ENCODE measurements at regions of chr12 and their contacts with region 1.

Region 1: DNA sequence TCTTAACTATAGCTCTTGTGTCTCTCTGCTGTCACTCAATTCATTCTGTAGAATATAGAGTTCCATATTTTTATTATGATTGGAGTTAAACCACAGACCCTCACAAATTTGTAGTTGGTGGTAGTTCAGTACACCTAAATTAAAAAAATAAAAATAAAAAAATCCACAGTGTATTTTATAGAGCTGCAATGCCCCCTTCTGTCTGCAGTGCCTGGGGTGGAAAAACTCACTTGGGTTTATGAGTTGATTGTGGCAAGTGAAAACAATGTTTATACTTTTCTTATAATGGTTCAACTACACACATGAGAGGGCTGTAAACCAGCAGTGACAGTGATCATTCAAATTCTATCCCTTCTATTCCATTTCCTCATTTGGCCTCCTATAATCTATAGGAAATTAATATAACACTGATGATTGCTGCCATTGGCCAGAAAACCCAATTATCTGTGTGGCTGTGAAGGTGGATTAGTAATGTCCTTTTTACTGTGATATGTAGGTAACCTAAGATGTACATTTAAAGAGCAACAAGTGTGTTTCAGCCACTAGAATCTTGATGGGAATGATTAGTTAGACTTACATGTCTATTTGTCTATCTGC is 166.9 kb upstream of the LRIG3 start:
- DNase-seq: no peak
- H3K4me3 ChIP-seq: no peak overlapping the region
- H3K27ac ChIP-seq: no peak overlapping the region
- H3K4me1 ChIP-seq: peaks cover 12% of the 10 kb centered on the region
- H3K27me3 ChIP-seq: no peaks in the 10 kb centered on the region
- CTCF ChIP-seq: peak; percentile 63 to 72

Region 2: DNA sequence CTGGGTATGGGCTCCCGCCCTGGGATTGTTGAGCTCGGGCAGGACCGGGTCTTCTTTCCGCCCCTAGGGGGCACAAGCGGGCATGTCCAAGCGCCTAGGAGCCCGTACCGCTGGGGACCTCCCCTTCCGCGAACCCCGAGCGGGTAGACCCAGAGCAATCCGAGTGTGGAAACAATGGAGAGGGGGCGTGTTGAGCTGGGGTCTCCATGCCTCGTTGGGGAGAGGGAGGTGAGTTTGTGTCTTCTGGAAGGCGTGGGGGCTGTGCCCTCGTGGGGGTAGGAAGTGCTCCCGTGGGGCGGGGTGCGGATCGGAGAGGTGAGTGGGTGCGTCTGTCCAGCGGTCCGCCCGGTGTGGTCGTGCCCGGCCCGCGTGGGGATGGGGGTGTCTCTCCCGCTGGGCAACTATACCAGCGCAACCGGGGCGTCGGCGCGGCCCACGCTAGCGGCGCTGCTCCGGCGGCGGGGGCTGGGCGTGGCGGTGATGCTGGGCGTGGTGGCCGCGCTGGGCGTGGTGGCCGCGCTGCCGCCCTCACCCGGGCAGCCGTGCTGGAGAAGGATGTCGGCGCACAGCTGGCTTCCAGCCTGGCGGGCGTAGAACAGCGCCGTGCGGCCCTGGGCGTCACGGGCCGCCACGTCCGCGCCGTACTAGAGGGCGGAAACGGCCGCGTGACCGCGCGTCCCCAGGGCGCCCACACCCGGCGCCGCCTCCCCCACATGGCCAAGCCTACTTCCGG is 1360.9 kb before region 1 on chr12:
- CTCF ChIA-PET with region 1: interaction called, 11 read pairs
- dilution Hi-C with region 1: no loop called
- in situ Hi-C with region 1: no loop called
- intact Hi-C with region 1: no loop called
- DNase-seq: peak; percentile 73
- H3K4me3 ChIP-seq: peak overlapping the region; percentile 64 to 82 (median 81)
- H3K27ac ChIP-seq: peak overlapping the region; percentile 38
- H3K4me1 ChIP-seq: peaks cover 10% of the 10 kb centered on the region
- H3K27me3 ChIP-seq: no peaks in the 10 kb centered on the region
- CTCF ChIP-seq: peak; percentile 55 to 91

Region 3: GRCh38 chr12:58105225-58106119 is 981.7 kb before region 1 on chr12:
- CTCF ChIA-PET with region 1: interaction called, 13 read pairs
- dilution Hi-C with region 1: no loop called
- in situ Hi-C with region 1: no loop called
- intact Hi-C with region 1: no loop called
- DNase-seq: peak; percentile 3
- H3K4me3 ChIP-seq: no peak overlapping the region
- H3K27ac ChIP-seq: no peak overlapping the region
- H3K4me1 ChIP-seq: no peaks in the 10 kb centered on the region
- H3K27me3 ChIP-seq: no peaks in the 10 kb centered on the region
- CTCF ChIP-seq: peak; percentile 38 to 60

Region 4: DNA sequence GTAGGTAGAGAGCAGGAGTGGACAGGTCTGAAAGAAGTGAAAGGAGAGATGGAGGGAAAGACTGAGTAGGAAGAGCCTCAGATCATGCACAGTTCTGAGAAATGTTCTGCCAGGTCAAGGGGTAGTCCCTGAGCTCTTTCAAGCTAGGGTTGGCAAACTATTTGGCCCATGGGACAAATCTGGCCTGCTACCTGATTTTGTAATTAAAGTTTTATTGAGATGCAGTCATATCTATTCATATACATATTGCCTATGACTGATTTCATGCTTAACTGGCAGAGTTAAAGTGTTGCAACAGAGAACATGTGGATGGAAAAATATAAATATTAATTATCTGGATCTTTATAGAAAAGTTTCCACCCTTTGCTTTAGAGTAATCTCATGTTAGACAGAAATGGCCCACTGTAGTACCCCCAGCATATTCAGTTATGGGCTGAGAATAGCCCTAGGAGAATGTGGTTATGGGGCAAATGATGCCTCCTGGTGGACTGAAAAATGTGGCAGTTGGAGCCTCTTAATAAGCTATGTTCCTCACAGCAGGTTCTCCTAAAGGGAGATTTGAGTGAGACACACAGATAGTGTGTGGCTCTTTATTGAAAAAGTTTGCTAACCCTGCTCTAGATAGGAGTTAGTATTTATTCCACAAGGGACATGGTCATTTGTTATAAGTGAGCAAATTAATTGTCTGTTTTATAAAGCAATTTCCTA is 643.7 kb before region 1 on chr12:
- CTCF ChIA-PET with region 1: no interaction called
- dilution Hi-C with region 1: no loop called
- in situ Hi-C with region 1: no loop called
- intact Hi-C with region 1: loop called (anchors 10 kb)
- DNase-seq: peak; percentile 35
- H3K4me3 ChIP-seq: no peak overlapping the region
- H3K27ac ChIP-seq: no peak overlapping the region
- H3K4me1 ChIP-seq: no peaks in the 10 kb centered on the region
- H3K27me3 ChIP-seq: no peaks in the 10 kb centered on the region
- CTCF ChIP-seq: peak; percentile 63 to 72

Region 5: GRCh38 chr12:58833853-58834252 is 253.3 kb before region 1 on chr12:
- CTCF ChIA-PET with region 1: interaction called, 3 read pairs
- dilution Hi-C with region 1: no loop called
- in situ Hi-C with region 1: no loop called
- intact Hi-C with region 1: loop called (anchors 1 kb)
- DNase-seq: no peak
- H3K4me3 ChIP-seq: no peak overlapping the region
- H3K27ac ChIP-seq: no peak overlapping the region
- H3K4me1 ChIP-seq: no peaks in the 10 kb centered on the region
- H3K27me3 ChIP-seq: no peaks in the 10 kb centered on the region
- CTCF ChIP-seq: peak in 1 of 2 donors; percentile 20

Region 6: DNA sequence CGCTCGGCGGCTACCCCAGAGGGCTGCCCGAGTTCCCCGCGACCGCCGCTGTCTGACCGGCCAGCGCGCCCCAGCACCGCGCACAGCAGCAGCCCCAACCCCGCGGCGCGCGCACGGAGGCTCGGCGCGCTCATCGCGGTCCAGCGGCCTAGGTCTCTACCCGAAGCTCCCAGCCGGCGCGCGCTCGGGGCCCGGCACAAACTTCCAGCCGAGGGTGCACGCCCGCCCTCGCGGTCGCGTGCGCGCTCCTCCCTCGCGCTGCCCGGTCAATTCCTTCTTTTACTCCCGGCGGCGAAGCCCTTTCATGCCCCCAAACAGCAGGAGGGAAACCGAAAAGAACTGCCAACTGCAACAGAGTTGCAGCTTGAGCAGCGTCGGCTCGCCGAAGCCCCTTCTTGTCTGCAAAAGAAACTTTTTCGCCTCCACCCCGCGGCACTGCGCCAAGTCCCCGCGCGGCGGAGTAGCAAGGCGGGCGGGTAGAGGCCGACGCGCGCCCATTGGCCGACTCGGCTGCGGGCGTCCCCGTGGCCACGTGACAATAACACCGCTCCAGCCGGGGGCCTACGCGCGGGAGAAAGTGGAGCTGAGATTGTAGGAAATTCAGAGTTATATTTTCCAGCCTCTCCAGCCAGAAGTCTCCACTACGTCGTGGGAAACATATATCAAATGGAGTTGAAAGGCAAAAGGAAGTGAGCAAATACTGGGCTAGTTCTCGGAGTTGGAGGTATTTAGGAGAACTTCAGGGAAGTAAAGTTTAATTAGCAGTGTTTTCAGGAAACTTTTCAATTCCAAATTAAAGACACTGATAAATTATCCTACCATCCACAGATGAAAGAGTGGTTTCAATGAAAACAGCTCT is 166.8 kb before region 1 on chr12 and contains the start of gene LRIG3:
- CTCF ChIA-PET with region 1: interaction called, 8 read pairs
- dilution Hi-C with region 1: no loop called
- in situ Hi-C with region 1: loop called in 1 of 2 experiments (anchors 10 kb)
- intact Hi-C with region 1: loop called (anchors 1 kb)
- DNase-seq: peak; percentile 88
- H3K4me3 ChIP-seq: peak within 1 kb of the TSS; percentile 69 to 88 (median 78)
- H3K27ac ChIP-seq: peak within 1 kb of the TSS; percentile 92
- H3K4me1 ChIP-seq: peaks cover 9% of the 10 kb centered on the region
- H3K27me3 ChIP-seq: no peaks in the 10 kb centered on the region
- CTCF ChIP-seq: peak in 1 of 2 donors; percentile 28
- total RNA-seq, gene LRIG3: 45.5 to 115 TPM

Region 7: GRCh38 chr12:59070322-59070933 is 16.7 kb before region 1 on chr12:
- CTCF ChIA-PET with region 1: no interaction called
- dilution Hi-C with region 1: no loop called
- in situ Hi-C with region 1: no loop called
- intact Hi-C with region 1: no loop called
- DNase-seq: no peak
- H3K4me3 ChIP-seq: peak overlapping the region in 1 of 3 experiments; percentile 2
- H3K27ac ChIP-seq: peak overlapping the region; percentile 71
- H3K4me1 ChIP-seq: peaks cover 43% of the 10 kb centered on the region
- H3K27me3 ChIP-seq: no peaks in the 10 kb centered on the region
- CTCF ChIP-seq: no peak

Region 8: GRCh38 chr12:59304077-59304721 is 217.0 kb after region 1 on chr12:
- CTCF ChIA-PET with region 1: no interaction called
- dilution Hi-C with region 1: no loop called
- in situ Hi-C with region 1: no loop called
- intact Hi-C with region 1: no loop called
- DNase-seq: no peak
- H3K4me3 ChIP-seq: no peak overlapping the region
- H3K27ac ChIP-seq: no peak overlapping the region
- H3K4me1 ChIP-seq: no peaks in the 10 kb centered on the region
- H3K27me3 ChIP-seq: peaks cover 2% of the 10 kb centered on the region
- CTCF ChIP-seq: no peak

Region 9: DNA sequence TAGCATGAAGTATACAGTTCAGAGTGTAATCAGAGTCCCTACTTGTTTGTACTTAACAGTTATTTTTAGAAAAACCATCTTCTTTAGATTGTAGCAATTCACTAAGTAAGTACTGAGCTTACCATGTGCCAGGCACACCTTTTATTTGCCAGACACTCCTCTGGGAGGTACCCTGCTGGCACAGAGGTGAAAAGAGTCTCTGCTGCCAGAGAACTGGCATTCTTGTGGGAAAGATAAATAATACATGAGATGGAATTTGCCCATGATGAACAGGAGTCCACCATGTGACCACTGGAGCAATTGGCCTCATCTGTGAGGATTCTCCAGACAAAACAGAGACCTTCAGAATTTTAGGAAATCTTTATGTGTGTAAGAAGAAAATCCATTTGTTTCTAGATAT is 309.3 kb after region 1 on chr12:
- CTCF ChIA-PET with region 1: no interaction called
- dilution Hi-C with region 1: no loop called
- in situ Hi-C with region 1: no loop called
- intact Hi-C with region 1: no loop called
- DNase-seq: no peak
- H3K4me3 ChIP-seq: no peak overlapping the region
- H3K27ac ChIP-seq: no peak overlapping the region
- H3K4me1 ChIP-seq: no peaks in the 10 kb centered on the region
- H3K27me3 ChIP-seq: no peaks in the 10 kb centered on the region
- CTCF ChIP-seq: no peak

Measured in mammary epithelial cell (primary cell).